K562 (cell line): ENCODE measurements at regions of chr1 and their contacts with region 1.

Region 1: GRCh38 chr1:8987881-8988617 is 38.2 kb downstream of the SLC2A7 start:
- DNase-seq: peak; percentile 62 to 86 (median 80)
- ATAC-seq: peak; percentile 95
- H3K4me3 ChIP-seq: no peak overlapping the region
- H3K27ac ChIP-seq: no peak overlapping the region
- H3K4me1 ChIP-seq: no peaks in the 10 kb centered on the region
- H3K27me3 ChIP-seq: peaks cover 9 to 32% of the 10 kb centered on the region in 2 experiments
- CTCF ChIP-seq: peak; percentile 87 to 97 (median 91)
- EP300 ChIP-seq: no peak
- POLR2A ChIP-seq: no peak
- RAD21 ChIP-seq: peak; percentile 56 to 79

Region 2: GRCh38 chr1:8873506-8874229 is 114.4 kb before region 1 on chr1:
- CTCF ChIA-PET with region 1: interaction called, 11 read pairs
- POLR2A ChIA-PET with region 1: interaction called, 3 read pairs
- in situ Hi-C with region 1: no loop called
- intact Hi-C with region 1: no loop called
- DNase-seq: peak; percentile 80 to 92 (median 84)
- ATAC-seq: peak; percentile 64
- H3K4me3 ChIP-seq: peak overlapping the region; percentile 82
- H3K27ac ChIP-seq: peak overlapping the region; percentile 74
- H3K4me1 ChIP-seq: peaks cover 20 to 29% of the 10 kb centered on the region in 2 experiments; a peak in 4 of 5 replicates
- H3K27me3 ChIP-seq: no peaks in the 10 kb centered on the region
- CTCF ChIP-seq: no peak
- EP300 ChIP-seq: 0 out of 2 replicates have a peak, but pooled peaks have one; percentile 63
- POLR2A ChIP-seq: peak; percentile 41; the same call in 1 of the 2 replicates
- RAD21 ChIP-seq: no peak